H1 (cell line): ENCODE measurements at regions of chr1 and their contacts with region 1.

Region 1: GRCh38 chr1:209585672-209586071 is 2.2 kb downstream of the CAMK1G start:
- DNase-seq: peak in 1 of 2 experiments; percentile 66
- H3K4me3 ChIP-seq: peak overlapping the region; percentile 22 to 45 (median 38); a peak in 7 of 8 replicates
- H3K27ac ChIP-seq: no peak overlapping the region
- H3K4me1 ChIP-seq: peaks cover 0 to 14% (median 9%) of the 10 kb centered on the region in 4 experiments; a peak in 5 of 7 replicates
- H3K27me3 ChIP-seq: peaks cover 0 to 27% (median 17%) of the 10 kb centered on the region in 4 experiments; a peak in 6 of 7 replicates
- CTCF ChIP-seq: no peak
- EP300 ChIP-seq: no peak
- POLR2A ChIP-seq: no peak
- RAD21 ChIP-seq: no peak

Region 2: DNA sequence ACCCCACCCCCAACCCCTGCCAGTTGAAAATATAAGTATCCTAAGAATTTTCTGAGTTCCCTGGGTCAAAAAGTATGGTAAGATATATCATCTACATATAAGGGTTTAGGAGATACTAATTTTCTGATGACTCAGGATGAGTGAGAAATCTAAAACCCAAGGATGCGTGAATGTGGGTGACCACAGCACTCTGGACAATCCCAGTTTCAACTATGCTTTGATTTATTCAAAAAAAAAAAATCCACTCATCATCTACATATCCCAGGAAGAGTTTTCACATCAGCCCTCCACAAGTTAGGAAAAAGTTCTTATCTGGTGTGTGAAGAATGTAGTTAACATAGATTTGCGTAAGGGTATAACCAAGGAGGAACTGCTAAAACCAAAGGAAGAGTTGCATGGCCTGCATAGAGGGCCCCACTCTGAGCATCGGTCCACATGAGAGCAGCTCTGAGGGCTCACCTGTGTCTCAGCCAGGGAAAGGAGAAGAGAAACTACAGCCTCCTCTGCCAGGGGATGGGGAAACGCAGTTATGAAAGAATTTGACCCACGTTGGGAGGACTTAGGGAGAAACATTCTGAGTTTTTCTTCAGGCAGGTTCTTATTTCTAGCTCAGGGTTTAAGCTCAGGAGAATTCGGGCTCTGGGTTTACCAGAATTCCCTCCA is 47.8 kb after region 1 on chr1:
- CTCF ChIA-PET with region 1: interaction called, 209 read pairs
- POLR2A ChIA-PET with region 1: no interaction called
- DNase-seq: no peak
- H3K4me3 ChIP-seq: no peak overlapping the region
- H3K27ac ChIP-seq: no peak overlapping the region
- H3K4me1 ChIP-seq: peaks cover 0 to 12% (median 7%) of the 10 kb centered on the region in 4 experiments; a peak in 4 of 7 replicates
- H3K27me3 ChIP-seq: no peaks in the 10 kb centered on the region
- CTCF ChIP-seq: no peak
- EP300 ChIP-seq: no peak
- POLR2A ChIP-seq: no peak
- RAD21 ChIP-seq: no peak

Region 3: DNA sequence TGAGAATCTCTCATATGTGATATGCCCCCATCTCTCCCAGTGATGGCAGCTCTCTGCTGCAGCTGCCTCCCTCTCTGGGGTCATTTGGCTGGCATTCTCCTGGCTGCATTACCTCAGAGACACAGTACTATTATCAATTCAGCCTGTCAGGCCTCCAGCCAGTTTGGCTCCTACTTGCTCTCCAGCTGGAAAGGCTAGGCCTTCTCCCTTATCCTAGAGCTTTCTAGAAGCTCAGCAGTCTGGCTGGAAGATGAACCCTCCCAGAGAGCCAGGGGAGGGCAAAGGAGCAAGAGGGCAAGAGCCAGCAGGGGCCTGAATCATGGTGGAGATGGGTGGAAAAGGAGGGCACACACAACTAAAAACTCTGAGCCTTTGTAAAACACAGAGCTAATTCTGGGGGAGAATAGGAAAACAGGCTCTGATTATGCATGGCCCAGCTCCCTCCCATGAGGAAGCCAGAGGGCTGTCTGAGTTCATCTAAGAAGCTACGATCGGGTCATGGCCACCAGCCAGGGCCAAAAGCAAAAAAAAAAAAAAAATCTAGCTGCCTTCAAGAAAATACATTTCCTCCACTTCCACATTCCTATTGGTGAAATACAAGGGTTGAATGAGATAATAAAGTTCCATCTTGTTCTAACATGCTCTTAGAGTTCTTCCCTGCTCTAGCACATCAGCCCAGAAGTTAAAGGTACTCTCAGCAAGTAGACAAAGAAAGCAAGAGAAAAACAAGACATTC is 57.8 kb after region 1 on chr1:
- CTCF ChIA-PET with region 1: interaction called, 16 read pairs
- POLR2A ChIA-PET with region 1: no interaction called
- DNase-seq: no peak
- H3K4me3 ChIP-seq: no peak overlapping the region
- H3K27ac ChIP-seq: no peak overlapping the region
- H3K4me1 ChIP-seq: 0 out of 7 replicates have a peak, but pooled peaks cover 0 to 5% (median 0%) of the 10 kb centered on the region in 4 experiments
- H3K27me3 ChIP-seq: no peaks in the 10 kb centered on the region
- CTCF ChIP-seq: no peak
- EP300 ChIP-seq: no peak
- POLR2A ChIP-seq: no peak
- RAD21 ChIP-seq: no peak